ENCODE measurements at regions of chr14 and their contacts with region 1.

Region 1: DNA sequence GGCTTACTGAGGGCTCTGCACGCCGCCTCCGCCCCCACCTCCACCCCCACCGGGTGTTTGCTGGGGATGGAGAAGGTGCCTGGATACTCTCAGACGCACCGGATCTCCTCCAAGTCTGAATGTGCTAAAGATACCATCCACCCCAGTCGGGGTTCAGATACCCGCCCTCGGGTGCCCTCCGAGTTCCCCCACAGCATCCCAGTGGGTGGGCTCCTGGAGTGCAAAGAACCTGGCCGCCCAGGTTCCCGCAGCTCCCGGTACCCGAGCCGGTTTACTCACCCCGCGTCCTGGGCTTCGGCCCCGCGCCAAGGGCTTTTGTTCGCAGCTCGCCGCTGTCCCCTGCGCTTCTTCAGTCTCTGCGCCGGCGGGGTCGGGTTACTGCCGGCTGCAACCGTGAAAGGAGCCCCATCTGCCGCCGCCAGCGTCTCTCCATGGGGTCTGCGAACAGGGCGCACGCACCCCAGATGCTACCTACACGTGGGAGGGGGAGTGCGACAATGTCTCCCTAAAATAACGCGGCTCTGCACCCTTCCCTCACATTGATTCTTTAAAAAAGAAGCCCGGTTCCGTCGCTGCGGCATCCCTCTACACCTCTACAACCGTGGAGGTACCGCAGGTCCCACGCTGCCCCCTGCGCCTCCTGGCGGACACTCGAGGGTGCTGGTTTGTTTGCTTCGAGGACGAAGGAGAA is at the start of gene CCDC177:
- DNase-seq: peak; percentile 85
- total RNA-seq, gene CCDC177: not detected

Region 2: GRCh38 chr14:69535230-69535848 is 39.1 kb before region 1 on chr14:
- intact Hi-C with region 1: loop called in 1 of 2 experiments (anchors 5 kb)
- DNase-seq: no peak

Region 3: GRCh38 chr14:69643443-69644164 is 69.2 kb after region 1 on chr14:
- intact Hi-C with region 1: no loop called
- DNase-seq: no peak

Measured in posterior vena cava (tissue), 2 donors.